ENCODE measurements at regions of chr10 and their contacts with region 1.

Region 1: DNA sequence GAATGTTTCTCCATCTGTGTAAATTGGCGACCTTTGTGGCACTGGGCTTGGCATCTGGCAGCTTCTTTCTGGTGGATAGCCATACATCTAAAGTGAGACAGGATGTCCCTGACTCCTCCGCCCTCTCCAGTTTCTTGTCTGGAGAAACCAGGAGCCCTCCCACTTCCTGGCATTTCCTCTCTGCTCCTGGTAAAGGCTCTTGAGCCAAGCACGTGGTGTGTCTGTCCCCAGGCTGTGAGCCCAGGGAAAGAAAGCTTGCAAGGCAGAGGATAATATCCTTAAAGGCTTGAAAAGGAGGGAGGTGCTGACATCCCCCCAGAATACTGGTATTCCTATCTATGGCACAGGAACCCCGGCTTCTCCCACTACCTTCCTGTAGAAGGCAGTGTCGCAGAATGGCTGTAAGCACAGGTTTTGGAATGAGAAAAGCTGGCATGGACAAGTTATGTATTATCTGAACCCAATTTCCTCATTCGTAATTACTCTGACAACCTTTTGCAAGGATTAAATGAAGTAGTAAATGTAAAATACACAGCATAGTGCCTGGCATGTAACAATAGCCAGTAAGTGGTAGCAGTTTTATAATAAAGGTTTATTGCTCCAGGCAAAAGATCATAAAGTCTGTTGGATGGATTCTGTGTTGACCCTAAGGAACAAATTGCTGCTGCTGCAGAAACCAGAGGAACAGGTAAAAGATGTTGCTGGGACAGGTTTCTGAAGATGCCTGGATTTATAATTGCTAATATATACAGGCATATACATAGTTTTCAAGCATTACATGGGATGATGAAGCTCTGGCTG is 11.8 kb upstream of the ACSL5 start:
- DNase-seq: no peak
- ATAC-seq: peak; percentile 74

Region 2: GRCh38 chr10:110783509-110784107 is 1578.5 kb before region 1 on chr10:
- intact Hi-C with region 1: loop called (anchors 10 kb)
- DNase-seq: no peak
- ATAC-seq: no peak

Region 3: DNA sequence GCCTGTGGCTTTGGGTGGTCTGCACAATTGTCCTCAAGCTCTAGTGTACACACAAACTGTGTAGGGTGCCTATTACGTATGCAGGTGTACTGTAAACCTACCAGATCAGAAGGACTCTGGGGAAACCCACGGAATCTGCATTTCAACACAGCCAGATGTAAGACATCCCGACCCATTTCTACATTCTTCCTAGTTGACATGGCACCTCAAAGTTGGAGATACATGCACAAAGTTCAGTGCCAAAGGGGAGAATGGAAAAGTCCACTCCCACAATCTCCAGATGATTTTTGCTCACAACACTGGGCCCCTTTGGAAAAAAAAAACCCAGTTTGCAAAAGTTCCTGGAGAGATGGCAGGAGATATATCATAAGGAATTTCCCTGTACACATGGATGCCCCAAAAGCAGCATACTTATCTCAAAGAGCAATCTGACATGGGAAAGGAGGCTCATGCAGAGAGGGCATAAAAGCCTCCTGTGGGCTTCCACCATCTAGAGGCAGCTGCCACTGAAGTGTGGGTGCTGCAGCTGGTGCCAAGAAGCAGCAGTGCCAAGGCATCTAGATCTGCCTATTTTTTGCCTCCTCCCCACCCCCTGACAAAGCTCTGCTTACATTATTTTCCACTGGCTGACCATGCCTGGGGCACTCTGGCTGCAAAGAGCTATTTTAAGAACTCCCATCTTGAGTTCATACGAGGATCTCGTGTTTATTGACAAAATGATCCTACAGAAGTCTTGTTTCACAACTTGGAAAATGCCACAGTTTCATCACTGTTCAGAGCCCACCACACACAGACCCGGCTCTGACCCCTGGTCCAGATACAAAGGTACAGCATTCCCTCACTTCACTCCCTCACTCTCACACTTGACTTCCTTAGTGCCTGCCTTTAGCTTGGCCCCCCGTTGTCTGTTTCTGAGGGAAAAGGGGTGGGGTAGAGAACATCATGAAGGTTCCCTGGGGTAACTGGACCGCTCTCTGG is 66.0 kb before region 1 on chr10:
- intact Hi-C with region 1: no loop called
- DNase-seq: no peak
- ATAC-seq: peak; percentile 92

Region 4: GRCh38 chr10:112394475-112394875 is 32.3 kb after region 1 on chr10:
- intact Hi-C with region 1: no loop called
- DNase-seq: no peak
- ATAC-seq: no peak

Region 5: DNA sequence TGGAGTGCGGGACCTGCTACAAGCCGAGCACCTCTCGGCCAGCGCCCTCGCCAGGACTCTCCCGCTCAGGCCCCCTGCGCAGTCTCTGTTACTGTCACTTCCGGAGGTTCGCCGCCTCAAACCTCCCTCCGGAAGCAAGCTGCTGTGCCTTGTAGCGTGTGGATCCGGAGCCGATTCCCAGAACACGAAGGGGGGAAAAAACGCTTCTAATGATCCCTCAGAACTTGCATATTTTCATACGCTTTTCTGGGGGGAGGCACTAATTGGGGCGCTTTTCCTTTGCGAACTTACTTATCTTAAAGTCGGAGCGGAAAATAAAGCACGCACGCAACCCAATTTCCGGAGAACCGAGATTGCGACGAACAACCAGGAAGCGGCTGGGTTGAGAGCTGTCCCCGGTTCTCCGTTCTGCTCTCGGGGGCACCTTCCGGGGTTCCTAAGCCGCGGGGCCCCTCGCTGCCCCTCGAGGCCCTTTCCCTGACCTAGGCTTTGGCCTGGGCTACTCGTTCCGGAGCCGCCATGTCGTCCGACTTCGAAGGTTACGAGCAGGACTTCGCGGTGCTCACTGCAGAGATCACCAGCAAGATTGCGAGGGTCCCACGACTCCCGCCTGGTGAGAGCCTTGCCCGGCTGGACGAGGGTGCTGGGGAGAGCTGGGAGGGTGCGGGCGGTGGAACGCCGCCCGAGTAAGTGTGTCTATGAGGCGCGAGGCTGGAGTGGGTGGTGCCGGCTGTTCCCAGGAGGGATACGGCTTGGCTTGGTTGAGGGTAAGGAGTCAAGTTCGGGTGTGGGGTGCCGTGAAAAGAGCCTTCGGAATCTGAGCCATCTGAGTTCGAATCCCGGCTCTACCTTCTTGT is 84.9 kb after region 1 on chr10 and contains the starts of genes VTI1A and ZDHHC6:
- intact Hi-C with region 1: loop called (anchors 1 kb)
- DNase-seq: peak; percentile 92
- ATAC-seq: peak; percentile 97
- total RNA-seq, gene VTI1A: 21.2 TPM
- total RNA-seq, gene ZDHHC6: 19.5 TPM

Measured in Right ventricle myocardium inferior (tissue), 1 donor.